ENCODE measurements at regions of chr15 and their contacts with region 1.

Region 1: GRCh38 chr15:84981054-84981710 is 474 bp upstream of the PDE8A start:
- DNase-seq: peak; percentile 99
- ATAC-seq: peak; percentile 75 to 84
- H3K4me3 ChIP-seq: peak overlapping the region; percentile 91
- H3K27ac ChIP-seq: peak overlapping the region; percentile 97 to 98
- H3K4me1 ChIP-seq: peaks cover 39% of the 10 kb centered on the region
- CTCF ChIP-seq: 0 out of 3 replicates have a peak, but pooled peaks have one; percentile 11
- EP300 ChIP-seq: peak; percentile 46 to 80; a peak in 3 of 5 replicates
- POLR2A ChIP-seq: peak; percentile 25
- RAD21 ChIP-seq: peak; percentile 36 to 51; a peak in 4 of 5 replicates

Region 2: GRCh38 chr15:84955089-84955848 is 25.9 kb before region 1 on chr15:
- CTCF ChIA-PET with region 1: interaction called, 41 read pairs
- POLR2A ChIA-PET with region 1: interaction called, 5 read pairs
- DNase-seq: peak; percentile 89 to 92
- ATAC-seq: peak; percentile 99
- H3K4me3 ChIP-seq: peak overlapping the region; percentile 34
- H3K27ac ChIP-seq: peak overlapping the region; percentile 87 to 90
- H3K4me1 ChIP-seq: peaks cover 13% of the 10 kb centered on the region
- CTCF ChIP-seq: peak; percentile 90
- EP300 ChIP-seq: no peak
- POLR2A ChIP-seq: no peak
- RAD21 ChIP-seq: peak; percentile 95

Region 3: GRCh38 chr15:84967380-84967779 is 13.8 kb before region 1 on chr15:
- CTCF ChIA-PET with region 1: interaction called, 12 read pairs
- POLR2A ChIA-PET with region 1: interaction called, 6 read pairs
- DNase-seq: no peak
- ATAC-seq: no peak
- H3K4me3 ChIP-seq: no peak overlapping the region
- H3K27ac ChIP-seq: peak overlapping the region in 1 of 2 experiments; percentile 42; a peak in 2 of 6 replicates
- H3K4me1 ChIP-seq: no peaks in the 10 kb centered on the region
- CTCF ChIP-seq: no peak
- EP300 ChIP-seq: no peak
- POLR2A ChIP-seq: no peak
- RAD21 ChIP-seq: no peak

Region 4: GRCh38 chr15:84992157-84992944 is 11.2 kb after region 1 on chr15:
- CTCF ChIA-PET with region 1: interaction called, 18 read pairs
- POLR2A ChIA-PET with region 1: no interaction called
- DNase-seq: peak; percentile 76 to 80
- ATAC-seq: peak; percentile 93 to 96
- H3K4me3 ChIP-seq: no peak overlapping the region
- H3K27ac ChIP-seq: peak overlapping the region; percentile 33 to 65; a peak in 5 of 6 replicates
- H3K4me1 ChIP-seq: peaks cover 64% of the 10 kb centered on the region
- CTCF ChIP-seq: no peak
- EP300 ChIP-seq: no peak
- POLR2A ChIP-seq: no peak
- RAD21 ChIP-seq: no peak

Measured in A549 (cell line).